CD14-positive monocyte (primary cell): ENCODE measurements at regions of chr4 and their contacts with region 1.

Region 1: DNA sequence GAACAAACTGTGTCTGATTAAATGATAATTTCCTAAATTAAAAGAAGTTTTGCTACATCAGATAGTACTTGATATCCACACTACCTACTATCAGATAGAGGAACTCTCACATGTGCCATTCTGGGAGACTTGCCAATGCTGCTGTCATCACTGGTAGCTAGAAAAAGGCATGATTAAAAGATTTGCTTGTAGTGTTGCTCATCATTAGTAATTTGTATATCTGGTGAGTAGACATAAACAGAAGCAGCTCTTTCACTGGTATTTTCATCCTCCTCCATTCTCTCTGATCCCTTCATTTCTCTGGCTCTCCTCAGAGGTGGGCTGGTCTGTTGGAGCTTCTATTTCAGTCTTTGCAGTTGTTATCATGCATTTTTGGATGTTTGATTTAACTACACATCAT is 56.0 kb downstream of the SPRY1 start:
- DNase-seq: peak; percentile 89 to 92 (median 92)
- H3K4me3 ChIP-seq: no peak overlapping the region
- H3K4me3 Mint-ChIP-seq: no peak overlapping the region
- H3K27ac ChIP-seq: peak overlapping the region in 1 of 2 donors; percentile 45
- H3K27ac Mint-ChIP-seq: peak overlapping the region; percentile 34 to 96 (median 85)
- H3K4me1 ChIP-seq: peaks cover 33 to 37% of the 10 kb centered on the region in 2 donors
- H3K4me1 Mint-ChIP-seq: peaks cover 37% of the 10 kb centered on the region
- H3K27me3 ChIP-seq: peaks cover 4 to 6% of the 10 kb centered on the region in 2 donors
- H3K27me3 Mint-ChIP-seq: peaks cover 5 to 25% (median 12%) of the 10 kb centered on the region in 3 donors
- CTCF ChIP-seq: no peak

Region 2: GRCh38 chr4:123412091-123412505 is 40.5 kb before region 1 on chr4:
- intact Hi-C with region 1: loop called in 1 of 2 experiments (anchors 5 kb)
- DNase-seq: no peak
- H3K4me3 ChIP-seq: no peak overlapping the region
- H3K4me3 Mint-ChIP-seq: no peak overlapping the region
- H3K27ac ChIP-seq: no peak overlapping the region
- H3K27ac Mint-ChIP-seq: peak overlapping the region in 1 of 7 donors; percentile 2
- H3K4me1 ChIP-seq: peaks cover 28 to 29% of the 10 kb centered on the region in 2 donors
- H3K4me1 Mint-ChIP-seq: peaks cover 39% of the 10 kb centered on the region
- H3K27me3 ChIP-seq: no peaks in the 10 kb centered on the region
- H3K27me3 Mint-ChIP-seq: peaks cover 0 to 2% (median 2%) of the 10 kb centered on the region in 3 donors
- CTCF ChIP-seq: no peak

Region 3: DNA sequence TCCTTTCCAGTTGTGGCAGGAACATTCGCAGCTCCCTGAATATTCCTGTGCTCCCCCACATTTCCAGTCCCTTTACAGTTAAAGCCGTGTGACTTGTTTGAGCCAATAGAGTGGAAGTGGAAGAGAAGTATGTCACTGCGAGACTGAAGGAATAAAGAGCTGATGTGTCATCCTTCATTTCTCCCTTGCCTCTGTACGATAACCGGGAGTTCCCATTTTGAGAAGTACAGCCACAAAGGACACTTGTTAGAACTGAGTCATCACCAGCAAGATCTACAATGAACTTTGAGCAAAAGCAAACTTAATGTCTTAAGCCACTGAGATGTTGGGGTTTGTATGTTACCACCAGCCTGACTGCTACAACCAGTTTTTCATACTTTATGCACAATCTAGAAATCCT is 36.3 kb after region 1 on chr4:
- intact Hi-C with region 1: loop called in 1 of 2 experiments (anchors 5 kb)
- DNase-seq: peak; percentile 81 to 95 (median 88)
- H3K4me3 ChIP-seq: no peak overlapping the region
- H3K4me3 Mint-ChIP-seq: no peak overlapping the region
- H3K27ac ChIP-seq: peak overlapping the region in 1 of 2 donors; percentile 66
- H3K27ac Mint-ChIP-seq: peak overlapping the region in 6 of 7 donors; percentile 51 to 92 (median 78)
- H3K4me1 ChIP-seq: peaks cover 10 to 12% of the 10 kb centered on the region in 2 donors
- H3K4me1 Mint-ChIP-seq: peaks cover 18% of the 10 kb centered on the region
- H3K27me3 ChIP-seq: no peaks in the 10 kb centered on the region
- H3K27me3 Mint-ChIP-seq: no peaks in the 10 kb centered on the region
- CTCF ChIP-seq: no peak

Region 4: GRCh38 chr4:124070688-124071484 is 618.3 kb after region 1 on chr4:
- intact Hi-C with region 1: no loop called
- DNase-seq: no peak
- H3K4me3 ChIP-seq: no peak overlapping the region
- H3K4me3 Mint-ChIP-seq: no peak overlapping the region
- H3K27ac ChIP-seq: no peak overlapping the region
- H3K27ac Mint-ChIP-seq: peak overlapping the region in 1 of 7 donors; percentile 14
- H3K4me1 ChIP-seq: no peaks in the 10 kb centered on the region
- H3K4me1 Mint-ChIP-seq: no peaks in the 10 kb centered on the region
- H3K27me3 ChIP-seq: no peaks in the 10 kb centered on the region
- H3K27me3 Mint-ChIP-seq: no peaks in the 10 kb centered on the region
- CTCF ChIP-seq: no peak